Caco-2 (cell line): ENCODE measurements at regions of chr19 and their contacts with region 1.

Region 1: GRCh38 chr19:3893509-3894179 is 13.2 kb downstream of the ATCAY start:
- DNase-seq: no peak
- H3K4me3 ChIP-seq: no peak overlapping the region
- H3K4me3 Mint-ChIP-seq: no peak overlapping the region
- H3K27ac Mint-ChIP-seq: no peak overlapping the region
- H3K4me1 ChIP-seq: no peaks in the 10 kb centered on the region
- H3K4me1 Mint-ChIP-seq: no peaks in the 10 kb centered on the region
- H3K27me3 ChIP-seq: no peaks in the 10 kb centered on the region
- H3K27me3 Mint-ChIP-seq: no peaks in the 10 kb centered on the region
- CTCF ChIP-seq: no peak

Region 2: DNA sequence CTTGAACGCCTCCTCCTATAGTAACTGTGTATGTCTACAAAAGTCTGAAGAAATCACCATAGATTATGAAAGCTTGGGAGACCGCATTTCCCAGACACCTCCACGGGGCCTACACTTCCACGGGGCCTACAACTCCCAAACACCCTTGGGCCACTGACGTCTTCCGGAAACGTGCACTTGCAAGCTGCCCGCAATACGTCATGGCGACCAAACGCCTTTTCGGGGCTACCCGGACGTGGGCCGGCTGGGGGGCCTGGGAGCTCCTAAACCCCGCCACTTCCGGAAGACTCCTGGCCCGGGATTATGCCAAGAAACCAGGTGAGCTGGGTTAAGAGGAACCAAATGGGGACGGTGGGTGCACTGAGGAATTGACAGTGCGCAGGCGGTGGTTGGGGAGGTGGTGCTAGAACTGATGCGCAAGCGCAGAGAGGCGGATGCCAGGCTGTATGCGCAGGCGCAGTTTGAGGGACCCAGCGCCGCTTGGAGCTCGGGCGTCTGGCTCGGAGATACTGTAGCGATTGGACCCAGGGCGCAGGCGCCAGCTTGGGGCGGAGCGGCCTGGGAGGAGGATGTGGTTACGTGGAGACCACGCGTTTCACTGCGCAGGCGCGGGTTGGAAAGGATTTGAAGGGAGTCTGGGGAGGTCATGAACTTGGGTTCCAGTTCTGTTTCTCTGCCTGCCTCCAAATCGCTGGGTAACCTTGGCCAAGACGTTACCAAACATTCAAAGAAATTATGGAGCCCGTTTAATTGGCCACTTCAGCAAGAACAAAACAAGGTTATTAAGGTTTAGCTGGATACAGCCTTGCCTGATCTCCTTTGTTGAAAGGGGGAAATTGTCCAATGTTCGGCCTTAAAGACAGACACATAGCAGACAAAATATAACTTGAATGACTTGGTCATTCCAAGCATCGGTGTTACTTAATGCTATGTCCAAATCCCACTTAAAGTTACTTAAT is 130.9 kb before region 1 on chr19 and contains the start of gene MRPL54:
- CTCF ChIA-PET with region 1: no interaction called
- POLR2A ChIA-PET with region 1: no interaction called
- intact Hi-C with region 1: no loop called
- DNase-seq: peak; percentile 98
- H3K4me3 ChIP-seq: peak within 1 kb of the TSS; percentile 68
- H3K4me3 Mint-ChIP-seq: peak within 1 kb of the TSS; percentile 96
- H3K27ac Mint-ChIP-seq: peak within 1 kb of the TSS; percentile 99
- H3K4me1 ChIP-seq: peaks cover 4% of the 10 kb centered on the region
- H3K4me1 Mint-ChIP-seq: peaks cover 8% of the 10 kb centered on the region
- H3K27me3 ChIP-seq: no peaks in the 10 kb centered on the region
- H3K27me3 Mint-ChIP-seq: no peaks in the 10 kb centered on the region
- CTCF ChIP-seq: no peak
- total RNA-seq, gene MRPL54: 46.4 and 54.5 TPM in 2 replicates

Region 3: GRCh38 chr19:4415352-4415751 is 521.7 kb after region 1 on chr19:
- CTCF ChIA-PET with region 1: no interaction called
- POLR2A ChIA-PET with region 1: interaction called, 16 read pairs
- intact Hi-C with region 1: no loop called
- DNase-seq: no peak
- H3K4me3 ChIP-seq: no peak overlapping the region
- H3K4me3 Mint-ChIP-seq: no peak overlapping the region
- H3K27ac Mint-ChIP-seq: peak overlapping the region; percentile 11
- H3K4me1 ChIP-seq: peaks cover 23% of the 10 kb centered on the region
- H3K4me1 Mint-ChIP-seq: peaks cover 15% of the 10 kb centered on the region
- H3K27me3 ChIP-seq: no peaks in the 10 kb centered on the region
- H3K27me3 Mint-ChIP-seq: no peaks in the 10 kb centered on the region
- CTCF ChIP-seq: no peak